PC-3 (cell line): ENCODE measurements at regions of chr9 and their contacts with region 1.

Region 1: DNA sequence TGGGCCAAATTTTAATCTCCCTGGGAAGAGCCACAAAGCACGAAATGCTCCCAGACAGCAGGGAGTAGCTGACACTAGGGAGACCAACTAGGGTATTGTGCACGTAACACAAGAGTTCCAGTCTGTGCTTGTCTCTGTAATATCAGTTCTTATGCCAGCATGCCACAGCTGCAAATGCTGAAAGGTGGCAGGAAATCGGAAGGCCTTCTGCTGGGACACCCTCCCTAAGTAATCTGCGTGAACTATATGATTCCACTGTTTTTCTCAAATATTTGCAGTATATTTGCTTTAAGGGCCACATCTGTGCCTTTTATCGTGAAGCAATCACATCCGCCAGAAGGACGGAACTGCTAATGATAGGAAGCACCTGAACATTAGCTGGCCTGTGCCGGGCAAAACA is 12.6 kb downstream of the VLDLR start:
- DNase-seq: no peak
- ATAC-seq: no peak
- H3K4me3 ChIP-seq: no peak overlapping the region
- H3K27ac ChIP-seq: no peak overlapping the region
- H3K4me1 ChIP-seq: no peaks in the 10 kb centered on the region
- H3K27me3 ChIP-seq: no peaks in the 10 kb centered on the region
- CTCF ChIP-seq: no peak

Region 2: GRCh38 chr9:2321523-2322151 is 312.5 kb before region 1 on chr9:
- CTCF ChIA-PET with region 1: interaction called, 11 read pairs
- POLR2A ChIA-PET with region 1: no interaction called
- intact Hi-C with region 1: no loop called
- DNase-seq: no peak
- ATAC-seq: no peak
- H3K4me3 ChIP-seq: no peak overlapping the region
- H3K27ac ChIP-seq: no peak overlapping the region
- H3K4me1 ChIP-seq: no peaks in the 10 kb centered on the region
- H3K27me3 ChIP-seq: no peaks in the 10 kb centered on the region
- CTCF ChIP-seq: peak; percentile 36; the same call in 1 of the 2 replicates